ENCODE measurements at regions of chr5 and their contacts with region 1.

Region 1: DNA sequence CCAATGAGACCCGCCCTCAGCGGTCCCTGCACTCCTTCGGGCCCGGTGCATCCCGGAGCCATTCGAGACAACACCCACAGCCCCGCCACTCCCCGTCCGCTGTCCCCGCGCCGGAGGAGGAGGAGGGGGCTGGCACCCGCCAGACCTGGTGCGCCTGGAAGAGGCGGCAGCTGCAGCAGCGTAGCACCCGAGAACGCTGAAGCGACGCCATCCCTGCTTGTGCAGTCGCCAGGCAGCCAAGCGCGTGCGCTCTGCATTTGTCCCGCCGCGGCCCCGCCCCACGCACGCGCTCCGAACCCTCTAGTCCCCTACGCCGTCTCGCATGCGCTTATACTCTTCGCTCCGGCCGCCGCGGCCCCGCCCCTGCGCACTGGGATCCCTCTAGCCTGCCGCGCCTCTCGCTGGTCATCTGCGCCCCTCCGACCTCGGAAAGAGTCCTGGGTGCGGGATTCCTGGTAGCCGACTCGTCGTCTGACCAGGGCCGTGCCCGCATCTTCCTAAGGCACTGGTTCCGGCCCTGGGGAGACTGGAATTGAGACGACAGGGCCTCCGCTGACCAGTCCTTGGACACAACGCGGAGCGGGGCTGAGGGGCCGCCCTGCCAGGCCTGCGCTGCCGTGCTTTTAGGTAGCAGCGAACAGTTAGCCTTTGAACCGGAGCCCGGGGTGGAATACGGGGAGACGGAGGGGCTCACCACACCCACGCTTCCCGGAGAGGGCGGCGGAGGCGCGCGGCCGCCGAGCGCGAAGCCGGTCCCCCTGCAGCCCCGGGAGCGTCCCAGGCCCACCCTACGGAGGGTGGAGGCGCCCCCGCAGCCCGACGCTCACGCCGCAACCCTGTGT is at the start of gene MRNIP:
- DNase-seq: peak; percentile 98 to 99
- ATAC-seq: peak; percentile 97 to 98 (median 98)
- H3K4me3 ChIP-seq: peak within 1 kb of the TSS; percentile 82
- H3K27ac ChIP-seq: peak within 1 kb of the TSS; percentile 88
- H3K4me1 ChIP-seq: peaks cover 19% of the 10 kb centered on the region
- H3K27me3 ChIP-seq: no peaks in the 10 kb centered on the region
- CTCF ChIP-seq: no peak
- total RNA-seq, gene MRNIP: 2.1 to 7.9 (median 5.1) TPM

Region 2: GRCh38 chr5:179806250-179807222 is 52.3 kb before region 1 on chr5 and contains the start of gene MGAT4B:
- intact Hi-C with region 1: loop called (anchors 2 to 5 kb)
- DNase-seq: peak; percentile 79 to 85
- ATAC-seq: peak; percentile 79 to 85 (median 84)
- H3K4me3 ChIP-seq: peak within 1 kb of the TSS; percentile 97
- H3K27ac ChIP-seq: peak within 1 kb of the TSS; percentile 96
- H3K4me1 ChIP-seq: peaks cover 41% of the 10 kb centered on the region
- H3K27me3 ChIP-seq: no peaks in the 10 kb centered on the region
- CTCF ChIP-seq: no peak
- total RNA-seq, gene MGAT4B: 29.3 to 58.4 (median 50.7) TPM